Activated naive CD4-positive, alpha-beta T cell treated with anti-CD3 and anti-CD28 coated beads for 36 hours (primary cell): ENCODE measurements at regions of chr9 and their contacts with region 1.

Region 1: DNA sequence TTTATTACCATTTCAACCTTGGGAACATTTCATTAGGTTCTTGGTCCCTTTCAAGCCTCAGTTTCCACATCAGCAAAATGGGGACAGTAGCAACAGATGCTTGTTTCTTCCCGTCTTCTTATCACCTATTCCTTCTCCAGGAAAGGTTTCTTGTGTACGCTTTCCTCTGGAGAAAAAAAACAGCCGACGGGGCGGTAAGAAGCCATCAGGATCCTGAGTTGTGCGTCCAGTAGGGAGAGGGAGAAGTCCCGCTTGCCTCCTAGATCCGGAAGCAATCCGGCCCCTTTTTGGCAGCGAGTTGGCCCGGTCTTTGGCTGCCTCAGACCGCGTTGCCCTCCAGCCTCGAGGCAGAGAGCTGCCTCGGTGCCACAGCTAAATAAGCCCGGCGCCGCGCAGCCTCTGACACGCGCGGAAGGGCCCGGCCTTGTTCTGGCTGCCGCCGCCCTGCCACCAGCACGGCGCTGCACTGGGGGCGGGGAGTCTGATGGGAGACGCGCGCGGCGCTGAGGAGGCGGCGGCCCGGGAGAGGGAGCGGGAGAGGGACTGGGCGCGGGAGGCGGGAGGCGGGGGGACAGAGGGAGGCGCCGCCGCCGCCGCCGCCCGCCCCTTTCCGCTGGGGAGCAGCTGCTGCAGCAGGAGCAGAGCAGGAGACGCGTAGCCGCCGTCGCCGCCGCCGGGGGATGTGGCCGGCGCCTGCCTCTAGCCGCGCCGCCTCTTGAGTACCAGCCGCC is at the start of gene SLC44A1:
- DNase-seq: peak; percentile 95
- H3K4me3 Mint-ChIP-seq: peak within 1 kb of the TSS; percentile 83
- H3K27ac Mint-ChIP-seq: peak within 1 kb of the TSS; percentile 76
- H3K4me1 Mint-ChIP-seq: peaks cover 15% of the 10 kb centered on the region
- H3K27me3 Mint-ChIP-seq: peaks cover 14% of the 10 kb centered on the region
- total RNA-seq, gene SLC44A1: 17.6 to 18.6 TPM

Region 2: GRCh38 chr9:104991144-104991953 is 252.8 kb before region 1 on chr9:
- CTCF ChIA-PET with region 1: no interaction called
- intact Hi-C with region 1: loop called (anchors 1 kb)
- DNase-seq: peak; percentile 90
- H3K4me3 Mint-ChIP-seq: peak overlapping the region; percentile 82
- H3K27ac Mint-ChIP-seq: peak overlapping the region; percentile 97
- H3K4me1 Mint-ChIP-seq: peaks cover 54% of the 10 kb centered on the region
- H3K27me3 Mint-ChIP-seq: peaks cover 14% of the 10 kb centered on the region

Region 3: DNA sequence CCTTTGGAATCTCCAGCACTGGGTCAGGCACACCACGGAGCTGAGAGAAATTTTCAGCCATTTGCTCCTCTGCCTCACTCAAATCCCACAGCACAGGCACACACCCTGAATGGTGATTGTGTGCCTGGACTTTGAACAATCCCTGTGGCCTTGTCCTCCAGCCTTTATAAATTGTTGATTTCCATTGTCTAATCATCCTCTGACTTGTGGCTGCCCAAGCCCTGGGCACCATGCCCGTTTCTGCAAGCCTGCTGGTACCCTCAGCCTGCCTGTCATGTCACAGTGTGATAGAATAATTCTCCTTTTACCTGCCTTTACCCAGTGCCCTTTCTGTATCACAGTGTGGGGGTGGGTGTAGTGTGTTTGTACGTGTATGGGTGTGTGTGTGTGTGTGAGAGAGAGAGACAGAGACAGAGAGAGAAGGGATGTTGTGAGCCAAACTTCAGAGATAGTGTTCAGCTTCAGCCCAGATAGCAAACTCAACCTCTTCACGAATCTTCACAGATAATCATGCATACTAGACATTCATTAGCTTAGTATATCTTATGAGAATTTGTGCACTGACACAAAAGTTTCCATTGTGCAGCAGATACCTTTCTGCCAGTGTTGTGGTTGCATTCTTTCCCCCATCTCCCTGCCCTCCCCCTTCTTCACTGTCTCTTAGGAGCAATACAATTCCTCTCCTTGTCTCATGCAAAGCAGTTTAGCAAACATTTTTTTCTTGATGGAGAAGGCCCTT is 27.6 kb before region 1 on chr9:
- CTCF ChIA-PET with region 1: no interaction called
- intact Hi-C with region 1: no loop called
- DNase-seq: no peak
- H3K4me3 Mint-ChIP-seq: no peak overlapping the region
- H3K27ac Mint-ChIP-seq: no peak overlapping the region
- H3K4me1 Mint-ChIP-seq: no peaks in the 10 kb centered on the region
- H3K27me3 Mint-ChIP-seq: no peaks in the 10 kb centered on the region

Region 4: DNA sequence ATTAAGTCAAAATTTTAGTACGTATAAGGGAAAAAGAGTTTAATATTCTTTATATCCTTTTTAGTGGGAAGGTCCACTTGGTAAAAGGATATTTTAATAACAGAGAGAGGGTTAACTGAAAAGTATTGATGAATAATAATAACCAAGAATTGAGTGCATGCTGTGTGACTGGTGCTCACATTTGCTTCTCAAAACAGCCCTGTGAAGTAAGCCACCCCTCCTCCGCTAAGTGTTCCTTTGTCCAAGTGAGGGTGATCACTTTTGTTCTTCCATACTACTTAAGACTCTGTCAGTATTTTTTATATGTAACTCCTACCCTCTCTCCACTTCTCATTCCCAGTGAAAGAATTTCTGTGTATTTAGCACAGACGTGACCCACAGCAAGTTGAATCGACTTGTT is 51.8 kb after region 1 on chr9:
- CTCF ChIA-PET with region 1: no interaction called
- intact Hi-C with region 1: loop called (anchors 2 kb)
- DNase-seq: no peak
- H3K4me3 Mint-ChIP-seq: no peak overlapping the region
- H3K27ac Mint-ChIP-seq: no peak overlapping the region
- H3K4me1 Mint-ChIP-seq: peaks cover 27% of the 10 kb centered on the region
- H3K27me3 Mint-ChIP-seq: no peaks in the 10 kb centered on the region

Region 5: DNA sequence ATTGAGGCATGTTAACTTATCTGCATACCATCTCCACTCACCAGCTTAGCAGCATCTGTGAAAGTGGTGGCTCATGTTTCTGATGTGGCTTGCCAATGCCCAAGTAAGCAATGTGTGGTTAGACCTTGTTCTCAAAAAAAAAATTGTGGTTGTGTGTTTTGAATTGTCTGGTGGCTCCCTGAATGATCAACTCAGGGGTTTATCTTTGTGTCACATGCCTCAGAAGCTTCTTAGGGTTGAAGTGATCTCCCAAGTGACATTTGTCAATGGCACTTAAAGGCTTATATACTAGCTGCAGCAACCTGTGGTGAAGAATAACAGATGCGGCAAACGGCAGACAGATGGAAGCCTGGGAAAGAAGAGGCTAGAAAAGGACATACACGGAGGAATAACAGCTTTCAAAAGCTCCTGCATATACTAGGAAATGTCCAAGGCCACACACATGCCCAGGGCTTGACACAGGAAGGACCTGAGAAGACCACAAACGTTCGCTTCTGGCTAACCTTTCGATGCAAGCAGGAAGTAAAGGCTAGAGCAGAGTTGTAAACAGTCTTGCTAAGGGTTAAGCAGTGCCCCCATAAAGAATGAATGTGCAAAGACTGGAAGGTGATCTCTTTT is 161.5 kb after region 1 on chr9:
- CTCF ChIA-PET with region 1: interaction called, 3 read pairs
- intact Hi-C with region 1: loop called (anchors 1 kb)
- DNase-seq: peak; percentile 69
- H3K4me3 Mint-ChIP-seq: no peak overlapping the region
- H3K27ac Mint-ChIP-seq: peak overlapping the region; percentile 6
- H3K4me1 Mint-ChIP-seq: peaks cover 26% of the 10 kb centered on the region
- H3K27me3 Mint-ChIP-seq: peaks cover 50% of the 10 kb centered on the region

Region 6: GRCh38 chr9:105541838-105542237 is 297.7 kb after region 1 on chr9:
- CTCF ChIA-PET with region 1: no interaction called
- intact Hi-C with region 1: loop called (anchors 2 kb)
- DNase-seq: no peak
- H3K4me3 Mint-ChIP-seq: no peak overlapping the region
- H3K27ac Mint-ChIP-seq: no peak overlapping the region
- H3K4me1 Mint-ChIP-seq: peaks cover 9% of the 10 kb centered on the region
- H3K27me3 Mint-ChIP-seq: peaks cover 7% of the 10 kb centered on the region